ENCODE measurements at regions of chr1 and their contacts with region 1.

Region 1: DNA sequence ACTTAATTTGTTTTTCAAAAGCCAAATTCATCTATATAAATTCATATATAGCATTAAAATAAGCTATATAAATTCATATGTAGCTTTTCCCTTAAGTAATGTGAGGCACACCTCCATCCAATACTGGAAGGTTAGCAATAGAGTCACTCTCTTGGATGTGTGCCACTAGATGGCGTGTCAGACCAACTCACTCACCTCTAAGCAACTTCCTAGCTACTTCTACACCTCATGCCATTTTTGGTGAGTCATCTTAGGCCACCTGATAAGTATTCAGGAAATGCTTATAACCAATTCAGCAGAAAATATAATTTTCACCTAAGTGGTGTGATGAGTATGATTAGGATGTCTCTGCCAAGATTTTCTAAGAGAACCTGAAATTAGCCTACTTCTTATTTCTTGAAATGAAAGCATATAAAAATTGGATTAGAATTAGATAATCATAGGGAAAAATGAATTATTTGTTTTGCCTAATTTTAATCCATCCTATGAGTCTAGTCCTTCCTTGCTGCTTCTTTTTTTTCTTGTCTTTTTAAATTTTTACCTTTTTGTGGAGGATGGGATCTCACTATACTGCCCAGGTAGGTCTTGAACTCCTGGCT is 34.4 kb upstream of the TADA1 start:
- DNase-seq: peak; percentile 96
- ATAC-seq: peak; percentile 100
- H3K4me3 ChIP-seq: no peak overlapping the region
- H3K27ac ChIP-seq: no peak overlapping the region
- H3K4me1 ChIP-seq: peaks cover 0 to 27% of the 10 kb centered on the region in 2 experiments; a peak in 3 of 4 replicates
- H3K27me3 ChIP-seq: no peaks in the 10 kb centered on the region
- CTCF ChIP-seq: peak; percentile 62 to 94 (median 74)
- POLR2A ChIP-seq: no peak
- RAD21 ChIP-seq: peak; percentile 95

Region 2: DNA sequence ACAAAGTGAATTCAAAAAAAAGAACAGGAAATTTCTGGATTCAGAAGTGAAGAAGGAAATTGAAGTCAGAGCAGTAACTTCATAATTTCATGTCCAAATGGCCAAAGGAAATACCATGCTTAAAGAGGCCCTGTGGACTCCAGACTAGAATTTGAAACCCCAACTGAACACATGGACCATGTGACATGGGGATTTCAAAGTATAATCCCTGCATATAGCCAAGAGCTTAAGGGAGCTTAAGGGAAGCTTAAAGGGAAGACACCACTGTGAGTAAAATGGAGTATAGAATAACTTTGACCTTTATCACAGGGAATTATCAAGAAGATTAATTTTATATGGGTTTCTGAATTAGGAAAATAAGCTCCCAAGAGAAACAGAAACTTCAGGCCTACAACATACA is 313.0 kb before region 1 on chr1:
- CTCF ChIA-PET with region 1: no interaction called
- POLR2A ChIA-PET with region 1: no interaction called
- RAD21 ChIA-PET with region 1: no interaction called
- intact Hi-C with region 1: no loop called
- DNase-seq: no peak
- ATAC-seq: no peak
- H3K4me3 ChIP-seq: no peak overlapping the region
- H3K27ac ChIP-seq: no peak overlapping the region
- H3K4me1 ChIP-seq: no peaks in the 10 kb centered on the region
- H3K27me3 ChIP-seq: no peaks in the 10 kb centered on the region
- CTCF ChIP-seq: no peak
- POLR2A ChIP-seq: no peak
- RAD21 ChIP-seq: no peak

Region 3: GRCh38 chr1:166875734-166876539 is 34.6 kb before region 1 on chr1 and contains the start of gene TADA1:
- CTCF ChIA-PET with region 1: interaction called, 11 read pairs
- POLR2A ChIA-PET with region 1: no interaction called
- RAD21 ChIA-PET with region 1: no interaction called
- intact Hi-C with region 1: no loop called
- DNase-seq: peak; percentile 96
- ATAC-seq: peak; percentile 87
- H3K4me3 ChIP-seq: peak within 1 kb of the TSS; percentile 69 to 71
- H3K27ac ChIP-seq: peak within 1 kb of the TSS; percentile 80
- H3K4me1 ChIP-seq: peaks cover 15 to 21% of the 10 kb centered on the region in 2 experiments
- H3K27me3 ChIP-seq: no peaks in the 10 kb centered on the region
- CTCF ChIP-seq: no peak
- POLR2A ChIP-seq: no peak
- RAD21 ChIP-seq: no peak
- total RNA-seq, gene TADA1: 16.0 TPM

Region 4: GRCh38 chr1:167052389-167052788 is 141.9 kb after region 1 on chr1:
- CTCF ChIA-PET with region 1: interaction called, 324 read pairs
- POLR2A ChIA-PET with region 1: interaction called, 7 read pairs
- RAD21 ChIA-PET with region 1: interaction called, 18 to 69 read pairs
- intact Hi-C with region 1: no loop called
- DNase-seq: peak; percentile 35
- ATAC-seq: peak; percentile 86
- H3K4me3 ChIP-seq: no peak overlapping the region
- H3K27ac ChIP-seq: no peak overlapping the region
- H3K4me1 ChIP-seq: peaks cover 0 to 7% of the 10 kb centered on the region in 2 experiments; a peak in 2 of 4 replicates
- H3K27me3 ChIP-seq: no peaks in the 10 kb centered on the region
- CTCF ChIP-seq: peak; percentile 58 to 71 (median 71); a peak in 5 of 6 replicates
- POLR2A ChIP-seq: no peak
- RAD21 ChIP-seq: peak; percentile 48

Region 5: DNA sequence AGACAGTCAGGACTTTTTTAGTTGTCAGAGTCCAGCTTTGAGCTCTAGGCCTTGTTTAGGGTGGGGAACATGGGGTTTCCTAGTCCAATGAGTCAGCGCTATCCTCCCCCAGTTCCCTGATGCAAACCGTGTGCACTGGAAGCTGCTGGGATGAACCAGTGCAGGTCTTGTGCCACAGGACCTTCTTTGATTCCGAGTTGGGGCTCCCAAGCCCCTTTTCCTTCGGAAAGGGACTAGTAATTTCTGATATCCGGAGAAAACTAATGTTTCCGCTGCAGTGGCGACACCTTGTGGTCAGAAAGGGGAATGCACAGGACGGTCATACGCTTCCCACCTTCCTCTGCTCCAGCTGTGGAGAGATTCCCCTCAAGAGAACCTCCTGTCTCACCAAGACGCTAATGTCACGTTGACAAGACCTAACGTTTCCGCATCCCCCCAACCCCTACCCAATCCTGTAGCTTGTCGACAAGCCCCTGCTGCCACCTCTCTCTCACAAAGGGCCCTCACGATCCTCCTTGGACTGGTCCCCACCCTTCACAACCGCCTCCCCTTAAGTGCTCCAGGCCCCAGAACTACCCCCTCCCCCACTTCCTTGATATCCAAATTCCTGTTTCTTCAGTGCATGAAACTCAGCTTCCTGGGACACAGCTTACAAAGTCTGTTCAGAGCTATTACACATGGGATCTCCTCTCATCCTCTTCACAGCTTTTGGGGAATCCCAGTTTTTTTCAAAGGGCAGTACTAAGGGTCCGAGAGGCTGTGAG is 148.7 kb after region 1 on chr1:
- CTCF ChIA-PET with region 1: interaction called, 324 read pairs
- POLR2A ChIA-PET with region 1: interaction called, 8 read pairs
- RAD21 ChIA-PET with region 1: interaction called, 44 to 69 read pairs
- intact Hi-C with region 1: loop called (anchors 1 kb)
- DNase-seq: peak; percentile 52
- ATAC-seq: peak; percentile 76
- H3K4me3 ChIP-seq: peak overlapping the region; percentile 31 to 32
- H3K27ac ChIP-seq: peak overlapping the region; percentile 10
- H3K4me1 ChIP-seq: peaks cover 3 to 22% of the 10 kb centered on the region in 2 experiments; a peak in 3 of 4 replicates
- H3K27me3 ChIP-seq: no peaks in the 10 kb centered on the region
- CTCF ChIP-seq: peak; percentile 75 to 95 (median 88); a peak in 5 of 6 replicates
- POLR2A ChIP-seq: no peak
- RAD21 ChIP-seq: peak; percentile 92

Region 6: DNA sequence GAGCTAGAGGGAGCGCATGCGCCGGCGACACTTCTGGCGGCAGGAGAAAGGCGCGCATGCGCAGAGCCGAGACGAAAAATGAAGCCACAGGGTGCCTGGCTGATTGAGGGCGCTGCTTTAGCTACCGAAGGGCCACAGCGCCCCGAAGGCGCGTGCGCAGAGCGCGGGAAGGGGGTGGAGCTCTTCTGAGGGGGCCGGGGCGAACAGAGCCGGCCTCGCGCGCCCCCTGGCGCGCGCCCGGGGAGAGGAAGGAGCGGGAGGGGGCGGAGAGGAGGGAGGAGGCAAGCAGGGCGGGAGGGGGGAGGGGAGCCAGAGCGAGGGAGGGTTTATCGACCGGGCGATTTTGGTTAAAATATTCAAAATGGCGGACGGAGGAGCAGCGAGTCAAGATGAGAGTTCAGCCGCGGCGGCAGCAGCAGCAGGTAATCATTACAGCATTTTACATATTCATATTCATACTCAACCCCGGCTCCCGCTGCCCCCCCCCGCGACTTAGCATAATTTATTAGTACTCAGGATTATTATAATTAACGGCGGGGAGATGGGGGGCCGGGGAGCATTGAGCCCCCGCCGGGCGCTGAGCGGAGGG is 310.1 kb after region 1 on chr1 and contains the start of gene POU2F1:
- CTCF ChIA-PET with region 1: interaction called, 14 read pairs
- POLR2A ChIA-PET with region 1: no interaction called
- RAD21 ChIA-PET with region 1: interaction called in 1 of 2 experiments, 4 read pairs
- intact Hi-C with region 1: no loop called
- DNase-seq: peak; percentile 96
- ATAC-seq: peak; percentile 85
- H3K4me3 ChIP-seq: peak within 1 kb of the TSS; percentile 69 to 75
- H3K27ac ChIP-seq: peak within 1 kb of the TSS; percentile 95
- H3K4me1 ChIP-seq: peaks cover 14 to 39% of the 10 kb centered on the region in 2 experiments
- H3K27me3 ChIP-seq: no peaks in the 10 kb centered on the region
- CTCF ChIP-seq: peak; percentile 61 to 70 (median 66); a peak in 5 of 6 replicates
- POLR2A ChIP-seq: no peak
- RAD21 ChIP-seq: peak; percentile 64
- total RNA-seq, gene POU2F1: 24.5 TPM